ENCODE measurements at regions of chr19 and their contacts with region 1.

Region 1: GRCh38 chr19:55503502-55504251 is 15.4 kb downstream of the SSC5D start:
- DNase-seq: peak; percentile 92
- ATAC-seq: peak; percentile 96
- H3K4me3 Mint-ChIP-seq: peak overlapping the region; percentile 70
- H3K27ac Mint-ChIP-seq: peak overlapping the region; percentile 78
- H3K4me1 Mint-ChIP-seq: peaks cover 23% of the 10 kb centered on the region
- H3K27me3 Mint-ChIP-seq: peaks cover 3% of the 10 kb centered on the region
- CTCF ChIP-seq: peak; percentile 99

Region 2: GRCh38 chr19:55141696-55142095 is 362.0 kb before region 1 on chr19:
- CTCF ChIA-PET with region 1: interaction called, 24 read pairs
- POLR2A ChIA-PET with region 1: no interaction called
- intact Hi-C with region 1: no loop called
- DNase-seq: no peak
- ATAC-seq: no peak
- H3K4me3 Mint-ChIP-seq: no peak overlapping the region
- H3K27ac Mint-ChIP-seq: no peak overlapping the region
- H3K4me1 Mint-ChIP-seq: peaks cover 4% of the 10 kb centered on the region
- H3K27me3 Mint-ChIP-seq: peaks cover 41% of the 10 kb centered on the region
- CTCF ChIP-seq: no peak

Region 3: DNA sequence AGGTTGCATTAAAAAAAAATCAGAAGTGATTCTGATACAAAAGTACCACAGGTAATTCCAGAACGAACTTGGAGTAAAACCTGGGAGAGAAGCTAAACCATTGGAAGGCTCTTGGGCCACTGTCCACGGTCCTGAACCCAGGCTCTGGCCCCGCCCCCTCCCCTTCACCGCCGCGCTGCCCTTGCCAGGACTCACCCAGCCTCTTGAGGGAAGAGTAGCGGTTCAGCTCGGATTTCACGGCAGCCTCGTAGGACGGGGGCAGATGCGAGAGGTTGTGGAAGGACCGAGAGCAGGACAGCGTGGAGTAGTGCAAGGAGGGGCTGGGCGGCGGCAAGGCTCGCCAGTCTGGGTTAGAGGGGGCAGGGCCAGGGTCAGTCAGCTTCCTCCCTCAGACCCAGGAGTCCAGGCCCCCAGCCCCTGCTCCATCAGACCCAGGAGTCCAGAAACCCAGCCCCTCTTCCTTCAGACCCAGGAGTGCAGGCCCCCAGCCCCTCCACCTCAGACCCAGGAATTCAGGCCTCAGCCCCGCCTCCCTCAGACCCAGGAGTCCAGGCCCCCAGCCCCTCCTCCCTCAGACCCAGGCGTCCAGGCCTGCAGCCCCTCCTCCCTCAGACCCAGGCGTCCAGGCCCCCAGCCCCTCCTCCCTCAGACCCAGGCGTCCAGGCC is 66.1 kb before region 1 on chr19:
- CTCF ChIA-PET with region 1: no interaction called
- POLR2A ChIA-PET with region 1: no interaction called
- intact Hi-C with region 1: no loop called
- DNase-seq: peak; percentile 50
- ATAC-seq: no peak
- H3K4me3 Mint-ChIP-seq: no peak overlapping the region
- H3K27ac Mint-ChIP-seq: no peak overlapping the region
- H3K4me1 Mint-ChIP-seq: peaks cover 14% of the 10 kb centered on the region
- H3K27me3 Mint-ChIP-seq: peaks cover 45% of the 10 kb centered on the region
- CTCF ChIP-seq: no peak

Region 4: DNA sequence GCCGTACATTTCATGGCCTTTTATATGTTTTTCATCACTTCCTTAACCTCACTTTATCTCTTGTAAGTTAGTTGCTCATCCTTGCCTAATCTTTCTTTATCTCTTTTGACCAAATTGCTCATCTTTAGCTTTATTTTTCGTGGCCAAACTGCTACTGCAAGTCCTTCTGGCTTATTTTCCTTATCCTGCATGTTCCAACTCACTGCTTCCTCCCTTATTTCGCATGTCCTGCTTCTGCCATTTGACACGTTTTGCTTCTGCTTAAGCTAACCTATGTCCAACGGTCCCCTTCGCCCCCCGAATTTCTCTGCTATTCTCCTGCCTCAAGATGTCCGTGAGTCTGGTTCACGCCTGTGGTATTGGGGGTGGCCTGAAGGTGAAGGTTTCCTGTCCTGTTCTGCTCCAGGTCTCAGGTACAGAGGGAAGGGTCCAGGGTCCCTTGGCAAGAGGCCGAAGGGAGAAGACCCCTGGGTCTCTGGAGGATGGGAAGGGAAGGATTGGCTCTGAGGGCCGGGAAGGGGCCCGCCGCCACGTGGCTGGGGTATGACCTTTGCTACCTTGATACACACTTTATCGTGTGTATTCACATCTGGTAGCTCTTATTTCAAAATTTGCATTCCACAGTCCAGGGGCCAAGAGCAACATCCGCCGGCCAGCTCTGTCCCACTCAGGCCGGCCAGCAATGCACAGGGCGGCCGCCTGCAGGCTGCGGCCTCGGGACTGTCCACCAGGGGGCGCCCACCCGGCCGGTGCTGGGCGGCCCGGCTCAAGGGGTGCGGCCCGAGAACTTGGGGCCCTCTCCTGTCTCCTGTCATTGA is 36.2 kb before region 1 on chr19:
- CTCF ChIA-PET with region 1: interaction called, 77 read pairs
- POLR2A ChIA-PET with region 1: interaction called, 3 read pairs
- intact Hi-C with region 1: loop called (anchors 5 kb)
- DNase-seq: peak; percentile 69
- ATAC-seq: peak; percentile 98
- H3K4me3 Mint-ChIP-seq: no peak overlapping the region
- H3K27ac Mint-ChIP-seq: no peak overlapping the region
- H3K4me1 Mint-ChIP-seq: peaks cover 5% of the 10 kb centered on the region
- H3K27me3 Mint-ChIP-seq: no peaks in the 10 kb centered on the region
- CTCF ChIP-seq: peak; percentile 98

Region 5: DNA sequence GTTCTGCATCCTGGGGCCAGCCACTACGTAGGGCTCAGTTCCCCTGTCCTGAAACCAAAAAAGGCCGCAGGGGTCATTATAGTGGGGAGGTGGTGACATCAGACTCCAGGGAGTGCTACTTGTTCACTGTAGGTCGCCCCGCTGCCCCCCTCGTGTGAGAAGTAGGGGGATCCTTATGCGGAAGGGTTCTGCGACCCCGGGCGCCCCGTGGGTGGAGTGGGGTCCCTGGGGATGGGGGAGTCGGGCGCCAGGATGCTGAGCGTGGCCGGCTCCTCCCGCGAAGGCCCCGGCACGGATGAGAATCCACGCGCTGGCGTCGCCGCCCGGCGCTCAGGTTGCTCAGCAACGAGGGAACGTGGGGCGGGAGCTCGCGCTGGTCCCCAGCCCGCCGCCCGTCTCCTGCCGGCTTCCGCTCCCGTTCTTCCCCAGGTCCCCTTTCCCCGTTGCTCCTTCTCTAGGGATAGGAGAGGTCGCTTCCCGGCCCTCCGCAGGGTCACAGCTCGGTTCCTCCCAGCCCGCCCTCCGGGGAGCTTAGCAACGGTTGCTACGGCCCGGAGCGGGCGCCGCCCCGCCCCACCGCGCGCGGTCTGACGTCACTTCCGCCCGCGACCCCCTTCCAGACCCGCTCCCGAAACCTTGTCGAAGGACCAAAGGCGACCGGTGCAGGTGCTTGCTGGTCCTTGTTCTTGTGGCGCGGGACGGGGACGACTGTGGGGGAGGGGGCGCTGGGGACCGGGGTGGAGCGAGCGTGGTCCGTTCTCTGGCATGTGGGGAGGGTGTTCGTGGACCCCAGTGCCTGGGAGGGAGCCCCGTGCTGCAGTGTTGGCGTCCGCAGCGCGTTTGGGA is 18.9 kb before region 1 on chr19 and contains the start of gene NAT14:
- CTCF ChIA-PET with region 1: interaction called, 31 read pairs
- POLR2A ChIA-PET with region 1: interaction called, 3 read pairs
- intact Hi-C with region 1: no loop called
- DNase-seq: peak; percentile 67
- ATAC-seq: peak; percentile 69
- H3K4me3 Mint-ChIP-seq: peak within 1 kb of the TSS; percentile 82
- H3K27ac Mint-ChIP-seq: peak within 1 kb of the TSS; percentile 84
- H3K4me1 Mint-ChIP-seq: peaks cover 22% of the 10 kb centered on the region
- H3K27me3 Mint-ChIP-seq: no peaks in the 10 kb centered on the region
- CTCF ChIP-seq: no peak
- total RNA-seq, gene NAT14: 18.9 to 19.9 TPM

Region 6: GRCh38 chr19:55605207-55605636 is 101.5 kb after region 1 on chr19:
- CTCF ChIA-PET with region 1: interaction called, 10 read pairs
- POLR2A ChIA-PET with region 1: interaction called, 3 read pairs
- intact Hi-C with region 1: no loop called
- DNase-seq: peak; percentile 99
- ATAC-seq: peak; percentile 86
- H3K4me3 Mint-ChIP-seq: peak overlapping the region; percentile 80
- H3K27ac Mint-ChIP-seq: peak overlapping the region; percentile 91
- H3K4me1 Mint-ChIP-seq: peaks cover 53% of the 10 kb centered on the region
- H3K27me3 Mint-ChIP-seq: no peaks in the 10 kb centered on the region
- CTCF ChIP-seq: no peak

Region 7: GRCh38 chr19:55632463-55632834 is 128.8 kb after region 1 on chr19:
- CTCF ChIA-PET with region 1: interaction called, 37 read pairs
- POLR2A ChIA-PET with region 1: interaction called, 3 read pairs
- intact Hi-C with region 1: no loop called
- DNase-seq: peak; percentile 98
- ATAC-seq: peak; percentile 55
- H3K4me3 Mint-ChIP-seq: no peak overlapping the region
- H3K27ac Mint-ChIP-seq: peak overlapping the region; percentile 63
- H3K4me1 Mint-ChIP-seq: peaks cover 34% of the 10 kb centered on the region
- H3K27me3 Mint-ChIP-seq: peaks cover 4% of the 10 kb centered on the region
- CTCF ChIP-seq: peak; percentile 75

Measured in activated CD8-positive, alpha-beta T cell treated with anti-CD3 and anti-CD28 coated beads for 36 hours (primary cell).